ENCODE measurements at regions of chr12 and their contacts with region 1.

Region 1: GRCh38 chr12:55812088-55812487 is 5.4 kb downstream of the SARNP start:
- DNase-seq: no peak

Region 2: GRCh38 chr12:55757701-55758100 is 54.4 kb before region 1 on chr12:
- intact Hi-C with region 1: loop called (anchors 5 kb)
- DNase-seq: no peak

Region 3: GRCh38 chr12:56158926-56159461 is 346.9 kb after region 1 on chr12:
- intact Hi-C with region 1: no loop called
- DNase-seq: peak in 6 of 10 donors; percentile 38 to 91 (median 62)